ENCODE measurements at regions of chr13 and their contacts with region 1.

Region 1: GRCh38 chr13:89966524-89966923 is 1381.0 kb upstream of the MIR17HG start:
- DNase-seq: no peak
- ATAC-seq: no peak
- H3K4me3 ChIP-seq: no peak overlapping the region
- H3K4me3 Mint-ChIP-seq: no peak overlapping the region
- H3K27ac ChIP-seq: no peak overlapping the region
- H3K27ac Mint-ChIP-seq: no peak overlapping the region
- H3K4me1 ChIP-seq: no peaks in the 10 kb centered on the region
- H3K4me1 Mint-ChIP-seq: no peaks in the 10 kb centered on the region
- H3K27me3 ChIP-seq: no peaks in the 10 kb centered on the region
- H3K27me3 Mint-ChIP-seq: no peaks in the 10 kb centered on the region
- CTCF ChIP-seq: no peak

Region 2: DNA sequence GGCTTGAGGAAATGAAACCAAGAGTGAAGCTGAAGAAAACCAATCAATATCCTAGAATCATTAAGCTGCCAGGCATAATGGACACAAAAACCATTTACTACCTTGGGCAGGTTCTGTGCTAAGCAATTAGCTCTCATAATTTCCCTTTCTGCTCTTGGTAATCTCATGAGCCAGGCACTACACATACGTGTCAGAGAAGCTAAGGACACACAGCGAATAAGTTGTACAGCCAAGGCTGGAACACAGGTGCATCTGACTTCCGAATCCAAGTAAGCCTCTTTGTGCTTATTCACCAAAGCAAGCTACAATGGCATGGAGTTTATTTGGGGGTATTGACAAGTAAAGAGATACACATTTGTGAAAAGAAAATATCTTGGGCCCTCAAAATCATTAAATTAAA is 37.0 kb after region 1 on chr13:
- CTCF ChIA-PET with region 1: no interaction called
- POLR2A ChIA-PET with region 1: no interaction called
- intact Hi-C with region 1: no loop called
- DNase-seq: no peak
- ATAC-seq: no peak
- H3K4me3 ChIP-seq: no peak overlapping the region
- H3K4me3 Mint-ChIP-seq: no peak overlapping the region
- H3K27ac ChIP-seq: no peak overlapping the region
- H3K27ac Mint-ChIP-seq: no peak overlapping the region
- H3K4me1 ChIP-seq: no peaks in the 10 kb centered on the region
- H3K4me1 Mint-ChIP-seq: no peaks in the 10 kb centered on the region
- H3K27me3 ChIP-seq: no peaks in the 10 kb centered on the region
- H3K27me3 Mint-ChIP-seq: no peaks in the 10 kb centered on the region
- CTCF ChIP-seq: no peak

Region 3: GRCh38 chr13:90015565-90016507 is 49.3 kb after region 1 on chr13:
- CTCF ChIA-PET with region 1: no interaction called
- POLR2A ChIA-PET with region 1: no interaction called
- intact Hi-C with region 1: loop called in 1 of 2 experiments (anchors 2 kb)
- DNase-seq: no peak
- ATAC-seq: no peak
- H3K4me3 ChIP-seq: no peak overlapping the region
- H3K4me3 Mint-ChIP-seq: no peak overlapping the region
- H3K27ac ChIP-seq: no peak overlapping the region
- H3K27ac Mint-ChIP-seq: no peak overlapping the region
- H3K4me1 ChIP-seq: no peaks in the 10 kb centered on the region
- H3K4me1 Mint-ChIP-seq: no peaks in the 10 kb centered on the region
- H3K27me3 ChIP-seq: no peaks in the 10 kb centered on the region
- H3K27me3 Mint-ChIP-seq: no peaks in the 10 kb centered on the region
- CTCF ChIP-seq: no peak